Dendritic cell treated with granulocyte-macrophage colony-stimulating factor and Interleukin-4, amounts not matched to agents 40 ng/mL and 50 ng/mL, for 4 days (primary cell): ENCODE measurements at regions of chr11 and their contacts with region 1.

Region 1: DNA sequence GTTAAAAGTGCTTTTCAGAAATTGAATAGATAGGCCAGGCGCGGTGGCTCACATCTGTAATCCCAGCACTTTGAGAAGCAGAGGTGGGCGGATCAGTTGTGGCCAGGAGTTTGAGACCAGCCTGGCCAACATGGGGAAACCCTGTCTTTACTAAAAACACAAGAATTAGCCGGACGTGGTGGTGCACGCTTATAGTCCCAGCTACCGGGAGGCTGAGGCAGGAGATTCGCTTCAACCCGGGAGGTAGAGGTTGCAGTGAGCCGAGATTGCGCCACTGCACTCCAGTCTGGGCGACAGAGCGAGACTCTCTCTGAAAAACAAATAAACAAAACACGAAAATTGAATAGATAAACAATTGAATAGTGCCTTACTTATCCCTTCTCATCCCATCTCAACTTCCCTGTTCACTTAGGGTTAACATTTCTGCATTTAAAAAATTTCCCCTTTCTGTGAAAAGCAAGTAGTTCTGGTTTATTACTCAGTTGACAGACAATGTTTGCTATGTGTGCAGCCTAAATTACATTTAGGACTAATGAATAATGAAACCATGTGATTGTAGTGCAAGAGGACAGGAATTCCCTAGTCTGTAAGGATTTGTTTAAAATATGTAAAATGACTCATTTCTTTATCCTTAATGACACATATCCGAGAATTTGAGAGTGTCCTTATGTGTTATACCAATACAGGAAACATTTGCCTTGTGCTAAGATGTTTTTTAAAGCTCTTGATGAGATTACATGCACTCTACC is 6.0 kb downstream of the RNF169 start:
- H3K4me3 Mint-ChIP-seq: peak overlapping the region; percentile 13
- H3K27ac Mint-ChIP-seq: peak overlapping the region; percentile 1
- H3K4me1 Mint-ChIP-seq: peaks cover 45% of the 10 kb centered on the region
- H3K27me3 Mint-ChIP-seq: no peaks in the 10 kb centered on the region

Region 2: GRCh38 chr11:74720596-74721478 is 33.8 kb before region 1 on chr11:
- intact Hi-C with region 1: no loop called
- H3K4me3 Mint-ChIP-seq: no peak overlapping the region
- H3K27ac Mint-ChIP-seq: no peak overlapping the region
- H3K4me1 Mint-ChIP-seq: no peaks in the 10 kb centered on the region
- H3K27me3 Mint-ChIP-seq: peaks cover 34% of the 10 kb centered on the region

Region 3: GRCh38 chr11:74786574-74786973 is 31.9 kb after region 1 on chr11:
- intact Hi-C with region 1: loop called (anchors 5 kb)
- H3K4me3 Mint-ChIP-seq: no peak overlapping the region
- H3K27ac Mint-ChIP-seq: no peak overlapping the region
- H3K4me1 Mint-ChIP-seq: peaks cover 22% of the 10 kb centered on the region
- H3K27me3 Mint-ChIP-seq: no peaks in the 10 kb centered on the region